ENCODE measurements at regions of chr6 and their contacts with region 1.

Region 1: DNA sequence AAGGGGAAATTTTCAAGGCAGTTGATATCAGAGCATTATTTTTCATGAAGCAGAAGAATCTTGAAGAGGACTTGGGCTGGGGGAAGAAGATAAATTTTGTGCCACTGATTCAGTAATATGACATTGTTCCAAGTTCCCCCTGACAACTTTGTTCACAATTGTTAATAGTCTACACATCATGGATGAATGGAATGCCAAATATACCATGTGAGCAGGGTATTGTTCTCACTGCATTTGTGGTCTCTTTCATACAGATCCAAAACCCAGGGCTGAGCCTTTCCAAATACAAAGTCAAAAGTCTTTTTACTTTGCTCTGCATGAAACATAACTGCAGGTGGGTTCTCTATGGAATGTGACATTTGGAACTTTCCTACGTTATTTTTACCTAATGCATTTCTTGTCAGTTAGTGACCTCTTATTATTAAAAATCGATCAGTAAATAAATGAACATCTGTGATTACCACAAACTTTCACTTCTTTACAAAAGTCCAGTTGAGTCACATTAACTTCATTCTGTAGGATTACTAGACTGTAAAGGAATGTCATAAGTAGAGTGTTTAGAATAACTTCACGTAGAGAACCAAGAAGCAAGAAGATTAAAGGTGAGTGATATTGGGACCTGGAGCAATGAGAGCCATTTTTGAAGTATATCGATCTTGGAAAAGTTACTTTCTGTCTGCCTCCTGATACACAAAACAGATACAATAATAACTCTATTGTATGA is 100.9 kb downstream of the RCAN2 start:
- DNase-seq: no peak
- ATAC-seq: no peak
- H3K4me3 ChIP-seq: no peak overlapping the region
- H3K27ac ChIP-seq: no peak overlapping the region
- H3K4me1 ChIP-seq: peaks cover 8 to 10% of the 10 kb centered on the region in 2 donors
- H3K27me3 ChIP-seq: no peaks in the 10 kb centered on the region
- CTCF ChIP-seq: no peak
- POLR2A ChIP-seq: no peak

Region 2: DNA sequence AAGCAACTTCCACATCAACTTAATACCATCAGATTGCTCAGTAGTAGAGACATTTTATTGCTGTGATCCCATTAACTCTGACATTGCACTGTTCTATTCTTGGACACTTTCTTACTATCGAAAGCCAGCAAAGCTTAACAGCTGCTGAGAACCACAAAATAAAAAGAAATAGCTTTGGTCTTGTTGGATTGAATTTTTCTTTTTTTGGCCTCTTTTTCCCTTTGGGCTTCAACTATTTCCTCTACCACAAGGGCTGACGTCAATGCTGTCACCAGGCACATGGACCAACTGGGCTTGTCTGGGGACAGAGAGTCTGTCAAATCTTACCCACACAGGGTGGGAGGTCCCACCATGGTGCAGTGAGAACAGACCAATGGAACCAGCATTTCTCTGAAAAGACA is 156.2 kb before region 1 on chr6:
- in situ Hi-C with region 1: no loop called
- intact Hi-C with region 1: loop called (anchors 5 kb)
- DNase-seq: peak in 1 of 2 donors; percentile 41
- ATAC-seq: peak; percentile 51 to 53
- H3K4me3 ChIP-seq: no peak overlapping the region
- H3K27ac ChIP-seq: peak overlapping the region; percentile 35 to 69 (median 58)
- H3K4me1 ChIP-seq: peaks cover 23 to 53% of the 10 kb centered on the region in 2 donors
- H3K27me3 ChIP-seq: no peaks in the 10 kb centered on the region
- CTCF ChIP-seq: no peak
- POLR2A ChIP-seq: no peak

Region 3: GRCh38 chr6:46246081-46246480 is 144.2 kb before region 1 on chr6:
- in situ Hi-C with region 1: no loop called
- intact Hi-C with region 1: no loop called
- DNase-seq: no peak
- ATAC-seq: no peak
- H3K4me3 ChIP-seq: no peak overlapping the region
- H3K27ac ChIP-seq: peak overlapping the region in 3 of 4 donors; percentile 10 to 55 (median 46)
- H3K4me1 ChIP-seq: peaks cover 25 to 68% of the 10 kb centered on the region in 2 donors
- H3K27me3 ChIP-seq: no peaks in the 10 kb centered on the region
- CTCF ChIP-seq: no peak
- POLR2A ChIP-seq: no peak

Region 4: GRCh38 chr6:46263707-46264086 is 126.6 kb before region 1 on chr6:
- in situ Hi-C with region 1: no loop called
- intact Hi-C with region 1: no loop called
- DNase-seq: no peak
- ATAC-seq: peak; percentile 56 to 59
- H3K4me3 ChIP-seq: no peak overlapping the region
- H3K27ac ChIP-seq: peak overlapping the region in 1 of 4 donors; percentile 48
- H3K4me1 ChIP-seq: peaks cover 16 to 30% of the 10 kb centered on the region in 2 donors
- H3K27me3 ChIP-seq: no peaks in the 10 kb centered on the region
- CTCF ChIP-seq: no peak
- POLR2A ChIP-seq: no peak

Region 5: DNA sequence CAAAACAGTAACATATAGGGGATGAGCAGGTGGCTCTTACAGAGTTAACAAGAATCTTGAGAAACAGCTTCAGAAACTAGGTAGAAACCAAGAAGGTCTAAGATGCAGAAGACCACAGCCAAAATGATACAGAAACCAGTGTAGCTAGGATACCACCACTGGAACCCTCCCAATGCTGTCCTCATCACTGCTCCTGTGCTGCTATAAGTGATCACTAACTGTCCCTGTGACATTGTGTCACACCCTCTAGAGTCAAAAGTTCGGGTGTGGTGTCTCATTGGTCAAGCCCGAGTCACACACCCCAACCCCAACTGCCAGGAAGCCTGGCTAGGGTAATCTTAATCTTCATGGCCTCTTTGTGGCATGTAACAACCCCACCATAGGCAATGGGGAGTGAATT is 52.2 kb before region 1 on chr6:
- in situ Hi-C with region 1: no loop called
- intact Hi-C with region 1: no loop called
- DNase-seq: no peak
- ATAC-seq: no peak
- H3K4me3 ChIP-seq: no peak overlapping the region
- H3K27ac ChIP-seq: no peak overlapping the region
- H3K4me1 ChIP-seq: no peaks in the 10 kb centered on the region
- H3K27me3 ChIP-seq: no peaks in the 10 kb centered on the region
- CTCF ChIP-seq: no peak
- POLR2A ChIP-seq: no peak

Region 6: GRCh38 chr6:46888031-46888430 is 497.7 kb after region 1 on chr6:
- in situ Hi-C with region 1: no loop called
- intact Hi-C with region 1: no loop called
- DNase-seq: no peak
- ATAC-seq: no peak
- H3K4me3 ChIP-seq: no peak overlapping the region
- H3K27ac ChIP-seq: no peak overlapping the region
- H3K4me1 ChIP-seq: no peaks in the 10 kb centered on the region
- H3K27me3 ChIP-seq: no peaks in the 10 kb centered on the region
- CTCF ChIP-seq: no peak
- POLR2A ChIP-seq: no peak